ENCODE measurements at regions of chr16 and their contacts with region 1.

Region 1: DNA sequence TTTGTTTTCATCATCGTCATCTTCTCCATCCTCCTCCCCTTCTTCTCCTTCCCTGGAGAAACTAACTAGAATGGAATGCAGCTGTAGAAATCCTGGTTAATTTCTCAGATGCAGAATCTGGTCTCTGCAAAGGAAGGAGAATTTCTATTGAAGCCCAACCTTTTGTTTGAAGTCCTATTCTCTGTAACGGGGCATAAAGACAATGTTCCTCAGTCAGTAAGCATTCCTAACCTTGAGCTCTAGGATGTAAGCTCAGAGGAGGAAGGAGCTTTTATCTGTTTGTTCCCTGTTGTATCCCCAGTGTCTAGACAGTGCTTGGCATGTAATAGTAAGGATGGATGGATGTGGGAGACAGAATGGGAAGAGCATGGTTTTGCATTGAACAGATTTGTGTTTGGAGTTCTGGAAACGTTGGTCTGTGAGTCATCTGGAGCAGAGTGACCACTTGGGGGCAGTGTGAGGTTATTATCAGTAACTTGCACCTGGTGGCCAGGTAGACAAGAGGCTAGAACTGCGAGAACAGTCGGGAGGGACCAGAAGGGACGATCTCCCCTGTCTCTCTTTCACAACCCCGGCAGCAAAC is 363.7 kb downstream of the SNX29 start:
- DNase-seq: no peak
- ATAC-seq: no peak
- H3K4me3 ChIP-seq: no peak overlapping the region
- H3K27ac ChIP-seq: no peak overlapping the region
- H3K4me1 ChIP-seq: peaks cover 0 to 26% (median 13%) of the 10 kb centered on the region in 9 donors
- H3K27me3 ChIP-seq: no peaks in the 10 kb centered on the region
- CTCF ChIP-seq: peak in 6 of 9 donors; percentile 6 to 47 (median 37)

Region 2: GRCh38 chr16:12089492-12090150 is 250.6 kb before region 1 on chr16:
- intact Hi-C with region 1: loop called in 3 of 10 experiments (anchors 5 to 10 kb)
- DNase-seq: peak; percentile 21 to 42
- ATAC-seq: peak; percentile 44 to 84 (median 72)
- H3K4me3 ChIP-seq: peak overlapping the region in 9 of 10 donors; percentile 17 to 44 (median 36)
- H3K27ac ChIP-seq: peak overlapping the region in 9 of 10 donors; percentile 15 to 75 (median 54)
- H3K4me1 ChIP-seq: peaks cover 10 to 54% (median 26%) of the 10 kb centered on the region in 9 donors
- H3K27me3 ChIP-seq: no peaks in the 10 kb centered on the region
- CTCF ChIP-seq: no peak

Region 3: DNA sequence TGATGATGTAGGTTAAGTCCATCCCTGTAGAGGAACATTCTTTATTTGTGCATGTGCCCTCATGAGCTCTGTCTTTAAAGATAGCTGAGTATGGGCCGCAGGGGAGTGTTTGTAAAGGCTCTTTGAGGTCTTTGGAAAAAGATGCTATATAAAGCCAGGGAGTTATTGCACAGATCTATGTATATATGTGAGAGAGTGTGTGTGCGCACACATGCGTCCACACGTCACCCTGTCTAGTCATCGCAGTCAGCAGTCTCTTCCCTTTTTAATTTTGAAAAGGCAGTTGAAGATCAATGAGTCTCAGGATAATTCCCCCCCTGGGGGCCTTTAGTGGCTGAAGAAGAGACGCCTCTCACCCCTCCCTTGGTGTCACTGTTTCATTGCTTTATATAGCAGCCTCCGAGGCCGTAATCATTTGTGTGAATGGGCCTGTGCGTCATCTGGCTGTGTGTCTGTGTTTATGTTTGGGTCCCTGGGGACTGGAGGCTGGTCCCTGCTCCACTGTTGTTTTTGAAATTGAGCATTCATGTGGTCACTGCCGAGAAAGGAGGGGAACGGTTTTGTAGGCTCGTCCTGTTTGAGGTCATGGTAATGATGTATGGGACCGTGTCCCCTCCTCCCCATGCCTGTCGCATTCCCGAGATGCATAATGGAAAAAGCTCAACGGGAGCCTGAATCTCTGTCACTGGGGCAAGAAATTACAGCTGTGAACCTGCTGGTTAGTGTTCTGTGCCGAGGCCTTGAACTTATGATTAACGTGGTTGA is 219.8 kb before region 1 on chr16:
- intact Hi-C with region 1: loop called in 1 of 10 experiments (anchors 10 kb)
- DNase-seq: peak in 1 of 2 donors; percentile 76
- ATAC-seq: peak; percentile 80 to 94 (median 91)
- H3K4me3 ChIP-seq: no peak overlapping the region
- H3K27ac ChIP-seq: peak overlapping the region in 3 of 10 donors; percentile 10 to 42 (median 12)
- H3K4me1 ChIP-seq: peaks cover 5 to 25% (median 21%) of the 10 kb centered on the region in 9 donors
- H3K27me3 ChIP-seq: no peaks in the 10 kb centered on the region
- CTCF ChIP-seq: peak in 1 of 9 donors; percentile 6

Measured in heart right ventricle (tissue), 16 donors.